ENCODE measurements at regions of chrX and their contacts with region 1.

Region 1: GRCh38 chrX:45515262-45516215 is 314.9 kb upstream of the DIPK2B start:
- DNase-seq: peak; percentile 98
- H3K4me3 ChIP-seq: no peak overlapping the region
- H3K27ac ChIP-seq: peak overlapping the region; percentile 93
- H3K4me1 ChIP-seq: peaks cover 33% of the 10 kb centered on the region
- H3K27me3 ChIP-seq: no peaks in the 10 kb centered on the region
- CTCF ChIP-seq: peak; percentile 71 to 84

Region 2: DNA sequence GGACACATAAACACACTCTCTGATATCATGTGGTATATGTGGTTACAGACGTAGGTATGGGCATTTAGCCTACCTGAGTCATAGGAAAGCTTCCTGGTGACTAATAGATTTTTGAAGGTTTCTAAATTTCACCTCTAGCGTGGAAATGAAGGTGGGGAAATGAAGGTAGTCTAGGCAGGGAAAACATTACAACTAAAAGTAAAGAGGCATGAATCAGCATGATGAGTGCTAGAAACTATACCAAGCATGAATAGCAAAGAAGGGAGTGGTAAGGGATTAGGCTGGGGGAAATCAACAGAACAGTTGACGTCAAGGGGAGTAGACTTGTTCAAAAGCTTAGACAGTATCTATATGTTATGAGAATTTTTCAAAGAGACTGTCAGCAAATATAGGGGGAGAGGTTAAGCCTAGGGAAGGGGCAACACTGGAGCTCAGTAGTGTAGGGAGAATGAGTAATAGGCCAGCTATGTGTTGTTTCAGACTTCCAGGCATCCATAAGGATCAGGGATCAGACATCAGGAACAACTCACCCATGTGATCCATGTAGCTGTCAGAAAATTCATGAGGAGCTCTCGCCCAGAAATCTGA is 35.6 kb before region 1 on chrX:
- CTCF ChIA-PET with region 1: no interaction called
- dilution Hi-C with region 1: loop called (anchors 5 kb)
- in situ Hi-C with region 1: no loop called
- intact Hi-C with region 1: loop called (anchors 2 kb)
- DNase-seq: peak; percentile 99
- H3K4me3 ChIP-seq: no peak overlapping the region
- H3K27ac ChIP-seq: peak overlapping the region; percentile 99
- H3K4me1 ChIP-seq: peaks cover 26% of the 10 kb centered on the region
- H3K27me3 ChIP-seq: no peaks in the 10 kb centered on the region
- CTCF ChIP-seq: no peak

Region 3: GRCh38 chrX:45596188-45596808 is 80.8 kb after region 1 on chrX:
- CTCF ChIA-PET with region 1: no interaction called
- dilution Hi-C with region 1: no loop called
- in situ Hi-C with region 1: no loop called
- intact Hi-C with region 1: loop called (anchors 5 kb)
- DNase-seq: no peak
- H3K4me3 ChIP-seq: no peak overlapping the region
- H3K27ac ChIP-seq: no peak overlapping the region
- H3K4me1 ChIP-seq: no peaks in the 10 kb centered on the region
- H3K27me3 ChIP-seq: no peaks in the 10 kb centered on the region
- CTCF ChIP-seq: peak in 1 of 2 donors; percentile 37

Region 4: DNA sequence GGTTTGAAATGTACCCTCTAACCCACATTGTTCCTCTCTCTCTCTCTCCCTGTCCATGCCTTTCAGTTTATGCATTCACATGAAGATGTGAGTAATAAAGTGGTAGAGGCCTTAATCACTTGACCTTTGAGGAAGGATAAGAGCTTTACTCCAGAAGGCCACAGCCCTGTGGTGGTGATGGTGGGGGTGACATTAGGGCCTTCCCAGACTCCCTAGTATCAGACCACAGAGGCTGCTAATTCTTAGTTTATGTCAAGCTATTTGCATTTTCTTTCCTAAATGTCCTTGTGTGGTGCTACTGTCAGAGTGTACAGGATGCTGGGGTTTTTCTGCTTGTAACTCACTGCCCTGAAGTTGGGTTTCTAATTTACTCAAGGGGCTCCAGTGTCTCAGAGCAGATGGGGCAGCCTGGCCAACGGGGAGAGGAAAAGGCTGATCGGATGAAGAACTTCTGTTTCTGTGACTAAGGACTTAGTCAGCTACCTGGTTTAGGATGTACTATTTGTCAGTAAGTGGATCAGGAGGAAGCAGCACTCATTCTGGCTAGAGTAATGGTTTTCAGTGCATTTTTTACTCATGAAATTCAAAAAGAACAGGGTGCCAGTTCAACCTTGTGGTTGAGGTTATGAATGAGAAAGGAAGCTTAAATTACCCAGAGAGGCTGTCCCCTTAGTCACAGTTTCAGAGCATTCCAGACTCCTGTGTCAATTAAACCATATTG is 194.7 kb after region 1 on chrX:
- CTCF ChIA-PET with region 1: no interaction called
- dilution Hi-C with region 1: no loop called
- in situ Hi-C with region 1: no loop called
- intact Hi-C with region 1: loop called (anchors 1 kb)
- DNase-seq: peak; percentile 99
- H3K4me3 ChIP-seq: no peak overlapping the region
- H3K27ac ChIP-seq: peak overlapping the region; percentile 93
- H3K4me1 ChIP-seq: peaks cover 54% of the 10 kb centered on the region
- H3K27me3 ChIP-seq: no peaks in the 10 kb centered on the region
- CTCF ChIP-seq: no peak

Region 5: GRCh38 chrX:45758319-45758718 is 242.8 kb after region 1 on chrX:
- CTCF ChIA-PET with region 1: interaction called, 8 read pairs
- dilution Hi-C with region 1: no loop called
- in situ Hi-C with region 1: loop called (anchors 10 kb)
- intact Hi-C with region 1: no loop called
- DNase-seq: peak; percentile 89
- H3K4me3 ChIP-seq: no peak overlapping the region
- H3K27ac ChIP-seq: peak overlapping the region; percentile 86
- H3K4me1 ChIP-seq: peaks cover 94% of the 10 kb centered on the region
- H3K27me3 ChIP-seq: no peaks in the 10 kb centered on the region
- CTCF ChIP-seq: no peak

Region 6: DNA sequence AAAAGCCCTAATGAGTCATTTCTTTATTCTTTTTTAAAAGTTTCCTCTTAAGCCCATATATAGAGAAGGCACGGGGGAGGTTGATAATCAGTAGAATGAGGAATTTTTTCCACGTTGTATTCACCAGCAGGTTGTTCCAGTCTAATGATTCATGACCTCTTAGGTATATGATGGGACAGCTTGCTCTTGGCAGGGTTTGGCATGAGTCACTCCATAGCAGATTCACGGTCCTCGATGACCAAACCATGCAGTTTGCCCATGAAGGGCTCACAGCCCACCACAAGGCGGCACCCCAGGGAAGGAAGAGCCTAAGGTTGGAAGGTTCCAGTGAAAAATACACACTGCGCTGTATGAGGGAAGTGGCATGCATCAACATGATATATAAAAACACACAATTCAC is 308.9 kb after region 1 on chrX:
- CTCF ChIA-PET with region 1: no interaction called
- dilution Hi-C with region 1: no loop called
- in situ Hi-C with region 1: no loop called
- intact Hi-C with region 1: loop called (anchors 1 kb)
- DNase-seq: peak; percentile 98
- H3K4me3 ChIP-seq: no peak overlapping the region
- H3K27ac ChIP-seq: peak overlapping the region; percentile 67
- H3K4me1 ChIP-seq: peaks cover 11% of the 10 kb centered on the region
- H3K27me3 ChIP-seq: no peaks in the 10 kb centered on the region
- CTCF ChIP-seq: peak; percentile 96 to 98

Region 7: GRCh38 chrX:46376246-46376885 is 860.8 kb after region 1 on chrX:
- CTCF ChIA-PET with region 1: no interaction called
- dilution Hi-C with region 1: no loop called
- in situ Hi-C with region 1: loop called in 1 of 2 experiments (anchors 25 kb)
- intact Hi-C with region 1: loop called (anchors 1 kb)
- DNase-seq: peak; percentile 61
- H3K4me3 ChIP-seq: no peak overlapping the region
- H3K27ac ChIP-seq: peak overlapping the region; percentile 7
- H3K4me1 ChIP-seq: peaks cover 20% of the 10 kb centered on the region
- H3K27me3 ChIP-seq: no peaks in the 10 kb centered on the region
- CTCF ChIP-seq: peak; percentile 50 to 61